Activated CD8-positive, alpha-beta T cell treated with anti-CD3 and anti-CD28 coated beads, Interleukin-2, amount 10 ng/mL, durations not matched to agents 7 days and 5 days (primary cell): ENCODE measurements at regions of chr13 and their contacts with region 1.

Region 1: GRCh38 chr13:21176220-21176982 is at the starts of genes MRPL57 and SKA3:
- DNase-seq: peak; percentile 95
- ATAC-seq: peak; percentile 94
- H3K4me3 Mint-ChIP-seq: peak within 1 kb of the TSS; percentile 98
- H3K27ac Mint-ChIP-seq: peak within 1 kb of the TSS; percentile 97
- H3K4me1 Mint-ChIP-seq: peaks cover 31% of the 10 kb centered on the region
- H3K27me3 Mint-ChIP-seq: no peaks in the 10 kb centered on the region
- total RNA-seq, gene MRPL57: 22.5 to 24.0 TPM
- total RNA-seq, gene SKA3: 51.0 to 52.5 TPM

Region 2: GRCh38 chr13:20942938-20943559 is 233.4 kb before region 1 on chr13:
- CTCF ChIA-PET with region 1: interaction called, 15 read pairs
- POLR2A ChIA-PET with region 1: no interaction called
- DNase-seq: no peak
- ATAC-seq: no peak
- H3K4me3 Mint-ChIP-seq: no peak overlapping the region
- H3K27ac Mint-ChIP-seq: no peak overlapping the region
- H3K4me1 Mint-ChIP-seq: peaks cover 10% of the 10 kb centered on the region
- H3K27me3 Mint-ChIP-seq: peaks cover 26% of the 10 kb centered on the region

Region 3: DNA sequence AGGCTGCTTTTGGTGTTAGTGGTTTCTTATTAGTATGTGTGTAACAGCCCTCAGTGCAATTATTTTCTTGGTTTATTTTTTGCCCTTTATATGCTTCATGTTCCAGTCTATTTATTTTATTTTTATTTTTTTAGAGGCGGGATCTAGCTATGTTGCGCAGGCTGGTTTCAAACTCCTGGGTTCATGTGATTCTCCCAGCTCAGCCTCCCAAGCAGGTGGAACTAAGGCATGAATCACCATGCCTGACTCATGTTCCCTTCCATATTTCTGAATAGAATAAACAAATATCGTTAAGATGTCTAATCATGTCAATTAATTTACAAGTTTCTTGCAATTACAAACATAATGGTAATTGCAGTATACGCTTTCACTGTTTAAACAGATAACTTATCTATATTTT is 11.8 kb before region 1 on chr13:
- CTCF ChIA-PET with region 1: interaction called, 3 read pairs
- POLR2A ChIA-PET with region 1: interaction called, 14 read pairs
- DNase-seq: no peak
- ATAC-seq: no peak
- H3K4me3 Mint-ChIP-seq: no peak overlapping the region
- H3K27ac Mint-ChIP-seq: no peak overlapping the region
- H3K4me1 Mint-ChIP-seq: no peaks in the 10 kb centered on the region
- H3K27me3 Mint-ChIP-seq: no peaks in the 10 kb centered on the region

Region 4: DNA sequence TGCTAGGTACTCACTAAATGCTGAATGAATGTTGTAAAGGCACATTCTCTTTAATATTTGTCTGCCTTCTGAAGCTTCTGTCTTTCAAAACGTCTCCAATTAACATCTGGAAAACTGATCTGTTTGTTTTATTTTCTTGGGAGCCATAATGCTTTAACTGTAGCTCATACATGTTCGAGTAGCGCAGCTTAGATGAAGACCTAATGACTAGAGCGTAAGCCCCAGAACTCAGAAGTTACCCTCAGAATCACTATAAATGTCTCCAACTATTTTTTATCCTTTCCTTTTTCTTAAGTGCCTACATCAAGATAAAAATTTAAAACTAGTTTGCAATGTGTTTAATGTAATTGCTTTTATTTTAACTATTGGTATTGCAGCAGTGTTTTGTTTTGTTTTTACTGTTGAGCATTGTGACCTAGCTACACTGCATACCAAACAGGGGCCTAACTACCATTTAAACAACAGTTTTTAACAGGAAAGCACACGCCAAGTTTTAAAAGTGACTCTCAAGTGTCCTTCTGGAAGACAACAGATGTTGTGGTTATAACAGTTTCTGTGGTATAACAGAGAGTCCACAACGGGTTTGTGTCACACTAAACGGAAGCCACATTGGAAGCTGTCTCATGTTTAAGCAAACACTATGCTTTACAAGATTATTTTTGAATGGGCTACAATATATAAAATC is 42.1 kb after region 1 on chr13:
- CTCF ChIA-PET with region 1: interaction called, 11 read pairs
- POLR2A ChIA-PET with region 1: interaction called, 40 read pairs
- DNase-seq: peak; percentile 64
- ATAC-seq: peak; percentile 87
- H3K4me3 Mint-ChIP-seq: peak overlapping the region; percentile 22
- H3K27ac Mint-ChIP-seq: peak overlapping the region; percentile 75
- H3K4me1 Mint-ChIP-seq: peaks cover 20% of the 10 kb centered on the region
- H3K27me3 Mint-ChIP-seq: peaks cover 45% of the 10 kb centered on the region

Region 5: GRCh38 chr13:21486322-21486721 is 309.9 kb after region 1 on chr13:
- CTCF ChIA-PET with region 1: no interaction called
- POLR2A ChIA-PET with region 1: no interaction called
- DNase-seq: no peak
- ATAC-seq: no peak
- H3K4me3 Mint-ChIP-seq: no peak overlapping the region
- H3K27ac Mint-ChIP-seq: no peak overlapping the region
- H3K4me1 Mint-ChIP-seq: no peaks in the 10 kb centered on the region
- H3K27me3 Mint-ChIP-seq: no peaks in the 10 kb centered on the region

Region 6: GRCh38 chr13:21603531-21604448 is 427.4 kb after region 1 on chr13 and contains the start of gene MICU2:
- CTCF ChIA-PET with region 1: no interaction called
- POLR2A ChIA-PET with region 1: interaction called, 10 read pairs
- DNase-seq: peak; percentile 95
- ATAC-seq: peak; percentile 98
- H3K4me3 Mint-ChIP-seq: peak within 1 kb of the TSS; percentile 86
- H3K27ac Mint-ChIP-seq: peak within 1 kb of the TSS; percentile 86
- H3K4me1 Mint-ChIP-seq: peaks cover 30% of the 10 kb centered on the region
- H3K27me3 Mint-ChIP-seq: peaks cover 9% of the 10 kb centered on the region
- total RNA-seq, gene MICU2: 33.1 to 35.3 TPM